A673 (cell line): ENCODE measurements at regions of chr12 and their contacts with region 1.

Region 1: GRCh38 chr12:45170456-45171042 is 45.3 kb upstream of the ANO6 start:
- DNase-seq: peak; percentile 85
- H3K4me3 ChIP-seq: no peak overlapping the region
- H3K27ac ChIP-seq: no peak overlapping the region
- H3K4me1 ChIP-seq: no peaks in the 10 kb centered on the region
- H3K27me3 ChIP-seq: no peaks in the 10 kb centered on the region
- CTCF ChIP-seq: peak; percentile 97

Region 2: GRCh38 chr12:45388545-45388944 is 218.0 kb after region 1 on chr12:
- CTCF ChIA-PET with region 1: interaction called, 10 read pairs
- POLR2A ChIA-PET with region 1: no interaction called
- intact Hi-C with region 1: loop called (anchors 2 kb)
- DNase-seq: peak; percentile 64
- H3K4me3 ChIP-seq: no peak overlapping the region
- H3K27ac ChIP-seq: no peak overlapping the region
- H3K4me1 ChIP-seq: no peaks in the 10 kb centered on the region
- H3K27me3 ChIP-seq: no peaks in the 10 kb centered on the region
- CTCF ChIP-seq: peak; percentile 73

Region 3: DNA sequence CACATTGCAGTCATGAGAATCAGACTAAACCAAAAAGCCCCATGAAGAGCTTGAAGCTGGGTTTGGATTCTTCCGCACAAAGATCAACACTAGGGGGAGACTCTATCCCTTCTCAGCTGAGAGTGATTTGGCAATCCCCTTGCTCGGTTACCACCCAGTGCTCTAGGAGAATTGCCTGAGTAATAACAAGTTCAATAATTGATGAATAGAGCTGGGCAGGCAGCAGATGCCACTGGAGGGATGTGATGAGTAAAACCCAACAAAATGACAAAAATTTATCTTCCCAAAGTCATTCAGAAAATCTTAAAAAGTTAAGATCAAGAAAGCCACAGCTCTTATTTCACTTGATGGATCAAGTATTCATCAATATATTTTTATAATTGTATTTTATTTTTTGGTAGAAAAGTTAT is 373.4 kb after region 1 on chr12:
- CTCF ChIA-PET with region 1: no interaction called
- POLR2A ChIA-PET with region 1: no interaction called
- intact Hi-C with region 1: loop called (anchors 5 kb)
- DNase-seq: peak; percentile 90
- H3K4me3 ChIP-seq: no peak overlapping the region
- H3K27ac ChIP-seq: no peak overlapping the region
- H3K4me1 ChIP-seq: peaks cover 33% of the 10 kb centered on the region
- H3K27me3 ChIP-seq: no peaks in the 10 kb centered on the region
- CTCF ChIP-seq: peak; percentile 90

Region 4: DNA sequence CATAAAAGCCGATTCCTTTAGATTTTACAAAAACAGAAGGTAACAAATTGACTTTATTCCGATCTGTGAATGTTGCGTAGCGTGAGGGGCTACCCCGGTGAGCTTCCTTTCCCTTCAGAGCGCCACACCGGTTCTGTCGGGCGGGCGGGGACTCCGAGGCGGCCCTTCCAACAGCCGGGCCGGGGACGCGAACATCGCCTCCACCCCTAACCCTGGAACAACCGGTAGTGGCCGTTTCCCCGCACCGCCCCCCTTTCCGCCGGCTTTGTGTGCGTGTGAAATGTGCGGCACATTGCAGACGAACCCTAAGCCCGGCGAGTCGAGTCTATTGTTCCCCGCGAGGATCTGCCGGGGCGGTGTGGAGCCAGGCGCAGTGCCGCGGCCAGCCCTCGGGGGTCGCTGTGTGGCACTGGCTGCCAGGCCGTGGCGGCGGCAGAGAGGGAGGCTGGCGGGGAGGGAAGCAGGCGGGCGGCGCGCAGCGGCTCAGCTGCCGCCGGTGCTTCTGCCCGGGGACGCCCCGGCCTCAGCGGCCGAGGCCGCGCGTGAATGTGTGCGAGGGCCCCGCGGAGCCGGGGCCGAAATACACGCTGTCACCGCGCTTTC is 558.2 kb after region 1 on chr12:
- CTCF ChIA-PET with region 1: no interaction called
- POLR2A ChIA-PET with region 1: no interaction called
- intact Hi-C with region 1: loop called (anchors 5 kb)
- DNase-seq: peak; percentile 99
- H3K4me3 ChIP-seq: peak overlapping the region; percentile 94
- H3K27ac ChIP-seq: peak overlapping the region; percentile 99
- H3K4me1 ChIP-seq: peaks cover 30% of the 10 kb centered on the region
- H3K27me3 ChIP-seq: no peaks in the 10 kb centered on the region
- CTCF ChIP-seq: peak; percentile 86

Region 5: GRCh38 chr12:46005151-46005797 is 834.7 kb after region 1 on chr12:
- CTCF ChIA-PET with region 1: no interaction called
- POLR2A ChIA-PET with region 1: no interaction called
- intact Hi-C with region 1: loop called (anchors 5 kb)
- DNase-seq: peak; percentile 10
- H3K4me3 ChIP-seq: no peak overlapping the region
- H3K27ac ChIP-seq: no peak overlapping the region
- H3K4me1 ChIP-seq: no peaks in the 10 kb centered on the region
- H3K27me3 ChIP-seq: no peaks in the 10 kb centered on the region
- CTCF ChIP-seq: peak; percentile 60